H1 (cell line): ENCODE measurements at regions of chr17 and their contacts with region 1.

Region 1: DNA sequence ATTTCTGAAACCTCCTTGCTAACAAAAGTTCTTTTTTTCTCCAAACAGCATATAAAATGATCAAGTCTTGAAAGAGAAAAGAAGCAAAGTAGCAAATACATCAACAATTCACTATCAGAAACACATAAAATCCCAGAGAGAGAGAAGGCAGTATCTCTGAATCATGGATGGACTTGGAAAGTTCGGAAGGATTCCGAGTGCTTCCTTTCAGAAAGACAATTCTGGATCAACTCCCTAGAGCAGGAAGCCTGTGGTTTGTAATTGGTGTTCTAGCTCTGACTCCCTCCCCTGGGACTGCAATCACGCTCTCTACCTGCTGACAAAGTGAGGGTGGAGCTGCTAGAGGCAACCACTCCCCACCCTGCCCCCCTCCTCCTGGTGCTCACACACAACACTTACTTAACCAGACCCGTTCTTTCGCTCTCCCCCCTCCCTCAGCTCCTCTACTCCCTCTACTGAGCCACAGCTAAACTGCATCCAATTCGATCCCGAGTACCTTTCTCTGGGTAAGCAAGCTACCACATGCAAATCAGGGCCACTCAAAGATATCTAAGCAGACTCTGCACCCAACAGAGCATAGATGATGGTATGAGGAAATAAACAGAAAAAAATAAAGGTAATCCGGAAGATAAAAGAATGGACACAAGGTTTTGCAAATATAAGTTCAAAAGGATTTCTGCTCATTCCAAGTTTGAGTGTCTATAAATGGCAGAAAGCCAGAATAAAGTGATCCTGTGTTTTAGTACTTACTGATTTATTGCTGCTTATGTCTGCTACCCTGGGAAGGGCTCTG is at the start of gene RNF43:
- DNase-seq: peak; percentile 84 to 95
- H3K4me3 ChIP-seq: peak within 1 kb of the TSS; percentile 42 to 70 (median 46)
- H3K27ac ChIP-seq: peak within 1 kb of the TSS; percentile 31; the same call in 1 of the 2 replicates
- H3K4me1 ChIP-seq: no peaks in the 10 kb centered on the region; a peak in 1 of 7 replicates
- H3K27me3 ChIP-seq: no peaks in the 10 kb centered on the region
- CTCF ChIP-seq: peak; percentile 71 to 88 (median 79)
- EP300 ChIP-seq: peak in 1 of 2 experiments; percentile 83; a peak in 1 of 3 replicates
- POLR2A ChIP-seq: peak; percentile 60 to 85
- RAD21 ChIP-seq: peak; percentile 76 to 87
- total RNA-seq, gene RNF43: 0.89 and 2.4 TPM in 2 replicates

Region 2: GRCh38 chr17:58328195-58329034 is 89.1 kb before region 1 on chr17 and contains the start of gene TSPOAP1:
- CTCF ChIA-PET with region 1: interaction called, 12 read pairs
- POLR2A ChIA-PET with region 1: no interaction called
- DNase-seq: peak in 1 of 2 experiments; percentile 84
- H3K4me3 ChIP-seq: peak within 1 kb of the TSS in 3 of 4 experiments; percentile 7 to 40 (median 21); a peak in 4 of 8 replicates
- H3K27ac ChIP-seq: no peak within 1 kb of the TSS
- H3K4me1 ChIP-seq: peaks cover 0 to 42% (median 29%) of the 10 kb centered on the region in 4 experiments; a peak in 6 of 7 replicates
- H3K27me3 ChIP-seq: peaks cover 0 to 16% (median 10%) of the 10 kb centered on the region in 4 experiments; a peak in 5 of 7 replicates
- CTCF ChIP-seq: no peak
- EP300 ChIP-seq: no peak
- POLR2A ChIP-seq: no peak
- RAD21 ChIP-seq: no peak
- total RNA-seq, gene TSPOAP1: 9.2 and 9.8 TPM in 2 replicates

Region 3: DNA sequence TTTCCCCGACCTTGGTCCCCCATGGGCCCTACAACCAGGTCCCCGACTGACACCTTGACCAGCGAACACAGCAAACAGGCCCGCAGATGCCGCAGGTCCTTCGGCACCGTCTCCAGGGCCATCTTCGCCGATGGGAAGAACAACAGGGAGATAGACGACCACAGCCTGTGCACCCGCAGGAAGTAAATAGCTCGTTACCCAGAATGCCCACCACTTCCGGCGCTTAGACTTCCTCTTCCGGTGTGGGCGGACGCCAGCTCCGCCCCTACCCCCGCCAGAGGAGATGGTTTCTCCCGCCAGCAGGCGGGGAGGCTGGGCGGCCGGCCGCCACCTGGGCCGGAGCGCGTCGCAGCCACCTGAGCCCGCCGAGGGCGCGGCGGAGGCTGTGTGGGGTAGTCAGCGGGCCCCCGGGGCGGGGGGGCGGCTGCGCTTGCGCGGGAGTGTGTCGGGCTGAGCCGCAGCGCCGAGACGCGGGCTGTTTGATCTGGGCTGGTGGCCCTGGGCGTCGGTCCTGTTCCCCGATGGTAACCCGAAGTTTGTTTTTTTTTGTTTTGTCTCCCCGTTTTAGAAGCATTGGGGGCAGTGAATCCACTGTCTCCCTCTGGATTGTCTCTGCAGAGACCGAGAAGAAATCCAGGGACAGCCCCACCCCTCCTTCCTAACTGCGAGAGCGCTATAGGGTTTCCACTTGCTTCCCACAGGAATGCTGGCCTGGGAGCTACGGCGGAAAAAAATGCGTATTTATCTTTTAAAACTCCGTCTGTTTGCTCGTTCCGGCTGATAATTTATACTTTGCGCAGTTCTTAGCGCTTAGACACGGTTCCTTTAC is 65.3 kb before region 1 on chr17 and contains the start of gene SUPT4H1:
- CTCF ChIA-PET with region 1: interaction called, 19 read pairs
- POLR2A ChIA-PET with region 1: interaction called, 14 read pairs
- DNase-seq: peak; percentile 80 to 88
- H3K4me3 ChIP-seq: peak within 1 kb of the TSS; percentile 90 to 96 (median 94)
- H3K27ac ChIP-seq: peak within 1 kb of the TSS; percentile 88
- H3K4me1 ChIP-seq: peaks cover 0 to 2% (median 0%) of the 10 kb centered on the region in 4 experiments; a peak in 1 of 7 replicates
- H3K27me3 ChIP-seq: no peaks in the 10 kb centered on the region
- CTCF ChIP-seq: peak in 1 of 3 experiments; percentile 10; a peak in 1 of 4 replicates
- EP300 ChIP-seq: peak in 1 of 2 experiments; percentile 97; a peak in 2 of 3 replicates
- POLR2A ChIP-seq: peak; percentile 68 to 86
- RAD21 ChIP-seq: peak in 1 of 2 experiments; percentile 22; a peak in 3 of 4 replicates
- total RNA-seq, gene SUPT4H1: 103 and 112 TPM in 2 replicates

Region 4: GRCh38 chr17:58382108-58382871 is 35.2 kb before region 1 on chr17:
- CTCF ChIA-PET with region 1: interaction called, 13 read pairs
- POLR2A ChIA-PET with region 1: no interaction called
- DNase-seq: peak in 1 of 2 experiments; percentile 28
- H3K4me3 ChIP-seq: no peak overlapping the region
- H3K27ac ChIP-seq: no peak overlapping the region
- H3K4me1 ChIP-seq: peaks cover 0 to 5% (median under 1%) of the 10 kb centered on the region in 4 experiments; a peak in 2 of 7 replicates
- H3K27me3 ChIP-seq: no peaks in the 10 kb centered on the region
- CTCF ChIP-seq: no peak
- EP300 ChIP-seq: no peak
- POLR2A ChIP-seq: no peak
- RAD21 ChIP-seq: no peak

Region 5: GRCh38 chr17:58427807-58428206 is 10.3 kb after region 1 on chr17:
- CTCF ChIA-PET with region 1: interaction called, 19 read pairs
- POLR2A ChIA-PET with region 1: interaction called, 3 read pairs
- DNase-seq: no peak
- H3K4me3 ChIP-seq: no peak overlapping the region
- H3K27ac ChIP-seq: no peak overlapping the region
- H3K4me1 ChIP-seq: no peaks in the 10 kb centered on the region
- H3K27me3 ChIP-seq: peaks cover 0 to 2% (median 0%) of the 10 kb centered on the region in 4 experiments; a peak in 1 of 7 replicates
- CTCF ChIP-seq: no peak
- EP300 ChIP-seq: no peak
- POLR2A ChIP-seq: no peak
- RAD21 ChIP-seq: no peak